ENCODE measurements at regions of chr9 and their contacts with region 1.

Region 1: GRCh38 chr9:114911167-114911821 is 19.1 kb downstream of the TNFSF8 start:
- DNase-seq: no peak
- ATAC-seq: peak; percentile 57

Region 2: DNA sequence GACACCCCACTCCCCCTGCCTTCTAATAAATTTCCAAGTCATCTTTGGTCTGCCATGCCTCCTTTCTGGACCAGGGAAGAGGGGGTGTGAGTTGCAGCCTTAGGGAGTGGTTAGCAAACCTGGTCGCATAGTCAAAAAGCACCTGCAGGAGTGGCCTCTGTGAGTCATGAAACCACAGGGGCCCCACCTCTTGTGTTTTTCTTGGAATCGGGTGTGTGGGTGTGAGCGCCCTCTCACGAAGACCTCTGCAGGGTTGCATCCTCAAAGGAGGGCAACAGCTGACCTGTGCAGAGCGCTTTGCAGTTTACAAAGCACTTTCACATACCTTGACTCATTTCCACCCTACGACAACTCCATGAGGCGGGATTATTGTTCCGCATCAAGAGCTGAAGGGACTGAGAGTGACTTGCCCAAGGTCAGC is 192.5 kb before region 1 on chr9:
- intact Hi-C with region 1: no loop called
- DNase-seq: no peak
- ATAC-seq: no peak

Region 3: GRCh38 chr9:114745108-114745848 is 166.0 kb before region 1 on chr9:
- intact Hi-C with region 1: loop called (anchors 10 kb)
- DNase-seq: no peak
- ATAC-seq: peak; percentile 21

Region 4: GRCh38 chr9:114958021-114958843 is 46.9 kb after region 1 on chr9:
- intact Hi-C with region 1: no loop called
- DNase-seq: peak; percentile 47
- ATAC-seq: peak; percentile 75

Region 5: GRCh38 chr9:114968671-114969070 is 57.4 kb after region 1 on chr9:
- intact Hi-C with region 1: no loop called
- DNase-seq: no peak
- ATAC-seq: no peak